ENCODE measurements at regions of chr16 and their contacts with region 1.

Region 1: DNA sequence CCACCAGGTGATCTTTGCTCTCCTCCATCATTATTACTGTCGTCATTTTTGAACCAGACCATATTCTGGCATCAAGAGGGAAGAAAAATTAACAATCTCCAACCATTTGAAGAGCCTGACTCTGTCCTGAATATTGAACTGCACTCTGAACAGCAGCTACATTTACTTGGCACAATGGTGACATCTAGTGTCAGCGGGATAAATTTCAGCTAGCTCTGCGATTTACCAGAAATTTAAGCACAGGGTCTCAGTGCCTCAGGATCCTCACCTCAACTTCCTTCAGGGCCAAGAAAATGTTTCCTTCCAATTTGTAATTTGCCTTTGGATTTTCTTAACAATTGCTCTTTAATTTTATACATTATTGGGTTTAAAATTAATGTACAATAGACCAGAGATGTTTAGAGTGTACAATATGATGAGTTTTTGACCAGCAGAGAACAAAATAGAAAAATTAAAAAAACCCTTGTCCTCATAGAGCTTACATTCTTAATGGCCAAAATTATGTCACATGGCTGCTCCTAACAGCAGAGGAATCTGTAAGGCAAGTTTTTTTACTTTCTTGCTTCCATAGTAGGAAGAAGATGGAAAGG is 10.7 kb upstream of the ZNF19 start:
- DNase-seq: peak; percentile 47
- H3K4me3 Mint-ChIP-seq: no peak overlapping the region
- H3K27ac Mint-ChIP-seq: no peak overlapping the region
- H3K4me1 Mint-ChIP-seq: no peaks in the 10 kb centered on the region
- H3K27me3 Mint-ChIP-seq: peaks cover 2% of the 10 kb centered on the region

Region 2: DNA sequence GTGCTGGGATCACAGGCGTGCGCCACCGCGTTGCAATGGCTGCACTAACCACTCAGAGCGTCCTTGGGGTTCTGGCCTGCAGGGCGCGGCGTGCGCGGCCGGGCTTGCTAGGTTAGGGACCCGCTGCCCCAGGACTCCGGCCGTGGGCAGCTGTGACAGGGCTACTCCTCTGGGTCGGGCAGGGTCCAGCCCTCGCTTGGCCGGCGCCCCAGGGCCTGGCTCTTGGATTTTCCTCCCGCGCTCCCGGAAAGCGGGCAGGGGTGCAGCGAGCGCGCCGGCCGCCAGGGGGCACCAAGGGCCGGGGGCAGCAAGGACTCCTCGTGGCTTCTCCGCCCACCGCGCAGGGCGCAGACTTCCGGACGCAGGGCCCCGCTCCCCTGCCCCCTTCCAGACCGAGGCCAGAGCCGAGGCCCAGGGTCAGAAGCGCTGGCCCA is 58.5 kb before region 1 on chr16:
- CTCF ChIA-PET with region 1: interaction called, 4 read pairs
- POLR2A ChIA-PET with region 1: no interaction called
- intact Hi-C with region 1: loop called (anchors 5 kb)
- DNase-seq: peak; percentile 44
- H3K4me3 Mint-ChIP-seq: no peak overlapping the region
- H3K27ac Mint-ChIP-seq: no peak overlapping the region
- H3K4me1 Mint-ChIP-seq: no peaks in the 10 kb centered on the region
- H3K27me3 Mint-ChIP-seq: peaks cover 10% of the 10 kb centered on the region

Region 3: DNA sequence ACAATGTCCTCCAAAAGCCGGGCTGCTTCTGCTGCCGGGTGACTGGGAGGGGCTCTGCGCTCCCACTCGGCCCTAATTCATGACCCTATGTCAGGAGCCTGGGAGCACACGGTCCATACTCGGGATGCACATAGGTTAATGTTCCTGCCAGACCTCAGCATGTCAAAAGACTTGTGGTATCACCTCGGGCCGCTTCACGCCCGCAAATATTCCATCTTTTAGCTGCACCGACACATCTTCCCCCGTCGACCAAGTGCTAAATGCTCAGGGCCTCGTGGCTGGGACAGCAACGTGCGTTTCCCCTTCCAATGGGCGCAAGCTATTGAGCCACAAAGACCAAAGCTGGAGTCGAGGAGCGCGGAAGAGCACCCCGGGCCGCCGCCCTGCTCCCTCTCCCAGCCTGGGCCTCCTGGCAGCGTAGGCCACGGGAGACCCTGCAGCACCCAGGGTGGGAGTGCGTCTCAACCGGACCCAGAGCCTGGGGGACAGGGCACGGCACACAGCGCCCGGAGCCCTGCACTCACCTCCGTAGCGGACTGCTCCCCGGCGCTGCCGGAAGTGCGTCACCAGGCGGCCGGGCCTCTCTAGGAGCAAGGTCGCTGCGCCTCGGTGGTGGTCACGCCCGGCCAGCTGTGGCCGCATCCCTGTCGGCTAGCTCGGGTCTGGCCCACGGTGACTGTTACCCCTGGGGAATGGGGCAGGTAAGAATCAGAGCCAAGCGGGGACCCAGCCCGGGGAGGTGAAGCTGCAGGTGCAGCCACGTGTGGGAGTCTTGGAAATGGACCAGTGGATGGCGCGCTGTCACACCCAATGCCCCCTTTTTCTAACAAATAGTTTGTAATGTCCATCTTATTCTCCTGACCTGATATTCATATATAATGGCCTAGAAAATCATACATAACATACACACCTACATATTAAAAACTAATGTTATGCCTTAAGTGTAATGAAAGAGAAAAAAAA is 37.9 kb before region 1 on chr16 and contains the start of gene ZNF23:
- CTCF ChIA-PET with region 1: interaction called, 11 read pairs
- POLR2A ChIA-PET with region 1: no interaction called
- intact Hi-C with region 1: no loop called
- DNase-seq: peak; percentile 84
- H3K4me3 Mint-ChIP-seq: peak within 1 kb of the TSS; percentile 84
- H3K27ac Mint-ChIP-seq: peak within 1 kb of the TSS; percentile 77
- H3K4me1 Mint-ChIP-seq: peaks cover 18% of the 10 kb centered on the region
- H3K27me3 Mint-ChIP-seq: no peaks in the 10 kb centered on the region
- total RNA-seq, gene ZNF23: 5.7 to 8.5 TPM

Region 4: DNA sequence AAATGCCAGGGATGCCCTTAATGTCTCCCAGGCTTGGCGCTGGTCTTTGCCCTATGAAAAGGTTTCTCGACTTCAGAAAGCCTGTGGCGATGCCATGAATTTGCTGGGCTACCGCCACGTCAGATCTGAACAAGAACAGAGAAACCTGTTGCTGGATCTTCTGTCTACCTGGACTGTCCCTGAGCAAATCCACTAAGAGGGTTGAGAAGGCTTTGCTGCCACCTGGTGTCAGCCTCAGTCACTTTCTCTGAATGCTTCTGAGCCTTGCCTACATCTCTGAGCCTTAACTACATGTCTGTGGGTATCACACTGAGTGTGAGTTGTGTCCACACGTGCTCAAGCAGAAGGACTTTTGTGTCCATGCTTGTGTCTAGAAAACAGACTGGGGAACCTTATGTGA is 37.8 kb after region 1 on chr16:
- CTCF ChIA-PET with region 1: interaction called, 6 read pairs
- POLR2A ChIA-PET with region 1: no interaction called
- intact Hi-C with region 1: loop called (anchors 5 kb)
- DNase-seq: peak; percentile 58
- H3K4me3 Mint-ChIP-seq: no peak overlapping the region
- H3K27ac Mint-ChIP-seq: no peak overlapping the region
- H3K4me1 Mint-ChIP-seq: peaks cover 4% of the 10 kb centered on the region
- H3K27me3 Mint-ChIP-seq: peaks cover 6% of the 10 kb centered on the region

Region 5: DNA sequence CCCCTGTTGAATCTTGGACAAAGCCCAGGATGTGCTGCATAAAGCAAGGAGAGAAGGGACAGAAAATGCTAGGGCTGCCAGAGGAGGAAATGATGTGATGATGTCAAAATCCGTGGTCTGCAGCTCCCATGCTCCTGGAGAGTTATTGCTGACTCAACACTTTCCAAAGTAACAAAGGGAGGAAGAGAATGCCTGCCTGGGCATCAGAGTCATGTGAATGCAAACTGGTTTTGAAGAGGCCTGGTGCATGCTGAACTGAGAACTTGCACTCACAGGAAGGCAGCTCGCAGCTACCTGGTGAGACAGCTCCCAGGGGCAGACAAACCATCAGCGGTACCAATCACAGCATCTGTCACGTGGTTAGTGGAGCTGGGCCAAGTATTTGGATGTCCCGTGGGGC is 128.9 kb after region 1 on chr16:
- CTCF ChIA-PET with region 1: no interaction called
- POLR2A ChIA-PET with region 1: no interaction called
- intact Hi-C with region 1: no loop called
- DNase-seq: no peak
- H3K4me3 Mint-ChIP-seq: no peak overlapping the region
- H3K27ac Mint-ChIP-seq: no peak overlapping the region
- H3K4me1 Mint-ChIP-seq: no peaks in the 10 kb centered on the region
- H3K27me3 Mint-ChIP-seq: peaks cover 4% of the 10 kb centered on the region

Measured in activated CD4-positive, alpha-beta memory T cell treated with anti-CD3 and anti-CD28 coated beads for 36 hours (primary cell).